ENCODE measurements at regions of chr2 and their contacts with region 1.

Region 1: DNA sequence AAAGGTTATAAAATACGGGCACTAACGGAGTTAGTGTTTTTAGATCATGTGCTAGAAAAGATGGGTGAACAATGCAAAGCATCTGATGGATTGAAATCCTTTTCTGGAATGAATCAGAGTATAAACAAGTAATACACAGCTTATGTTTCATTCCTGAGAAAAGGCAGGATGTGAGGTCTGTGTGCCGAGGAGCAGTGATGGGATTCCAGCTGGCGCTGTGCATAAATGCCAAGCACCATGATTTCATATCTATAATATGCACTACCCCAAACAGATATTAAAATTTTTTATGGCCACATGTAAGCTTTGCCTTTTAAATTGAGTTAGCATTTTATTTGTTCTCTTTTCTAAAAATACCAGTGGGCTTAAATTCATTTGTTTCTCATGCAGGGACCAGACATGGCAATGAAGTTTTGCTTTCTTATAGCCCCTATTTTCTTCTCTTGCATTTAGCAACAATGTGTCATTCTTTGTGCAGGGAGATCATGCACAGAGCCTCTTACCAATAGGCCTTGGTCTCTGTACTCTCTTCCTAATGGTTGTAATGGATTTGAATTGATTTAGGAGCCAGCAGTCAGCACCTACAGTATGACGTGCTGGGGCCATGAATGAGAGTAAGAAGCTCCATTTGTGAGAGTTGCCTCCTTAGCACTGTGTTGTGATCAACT is 323.9 kb downstream of the SLC8A1 start:
- DNase-seq: no peak
- ATAC-seq: no peak
- H3K4me3 ChIP-seq: no peak overlapping the region
- H3K27ac ChIP-seq: peak overlapping the region in 9 of 12 donors; percentile 4 to 91 (median 75)
- H3K4me1 ChIP-seq: peaks cover 0 to 78% (median 38%) of the 10 kb centered on the region in 12 donors
- H3K27me3 ChIP-seq: no peaks in the 10 kb centered on the region
- CTCF ChIP-seq: no peak
- POLR2A ChIP-seq: no peak

Region 2: DNA sequence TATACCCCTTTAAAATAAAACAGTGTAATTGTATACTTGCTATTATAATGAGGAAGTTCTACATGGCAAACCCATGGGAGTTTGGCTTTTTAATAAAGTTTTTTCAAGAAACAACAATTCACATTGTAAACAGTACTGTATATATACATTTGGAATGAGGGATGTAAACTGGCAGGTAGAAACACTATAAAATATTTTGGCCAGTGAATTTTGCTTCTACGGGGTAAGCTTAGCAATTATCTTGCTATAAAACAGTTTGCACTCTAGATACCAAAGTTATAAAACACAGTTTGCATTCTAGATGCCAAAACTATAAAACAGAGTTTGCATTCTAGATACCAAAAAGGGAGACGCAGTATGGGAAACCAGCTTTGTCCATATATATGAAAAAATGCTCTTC is 365.6 kb before region 1 on chr2:
- intact Hi-C with region 1: no loop called
- DNase-seq: no peak
- ATAC-seq: no peak
- H3K4me3 ChIP-seq: no peak overlapping the region
- H3K27ac ChIP-seq: no peak overlapping the region
- H3K4me1 ChIP-seq: no peaks in the 10 kb centered on the region
- H3K27me3 ChIP-seq: no peaks in the 10 kb centered on the region
- CTCF ChIP-seq: no peak
- POLR2A ChIP-seq: no peak

Region 3: GRCh38 chr2:39948016-39948719 is 179.9 kb before region 1 on chr2:
- intact Hi-C with region 1: no loop called
- DNase-seq: no peak
- ATAC-seq: no peak
- H3K4me3 ChIP-seq: no peak overlapping the region
- H3K27ac ChIP-seq: no peak overlapping the region
- H3K4me1 ChIP-seq: no peaks in the 10 kb centered on the region
- H3K27me3 ChIP-seq: no peaks in the 10 kb centered on the region
- CTCF ChIP-seq: no peak
- POLR2A ChIP-seq: no peak

Region 4: DNA sequence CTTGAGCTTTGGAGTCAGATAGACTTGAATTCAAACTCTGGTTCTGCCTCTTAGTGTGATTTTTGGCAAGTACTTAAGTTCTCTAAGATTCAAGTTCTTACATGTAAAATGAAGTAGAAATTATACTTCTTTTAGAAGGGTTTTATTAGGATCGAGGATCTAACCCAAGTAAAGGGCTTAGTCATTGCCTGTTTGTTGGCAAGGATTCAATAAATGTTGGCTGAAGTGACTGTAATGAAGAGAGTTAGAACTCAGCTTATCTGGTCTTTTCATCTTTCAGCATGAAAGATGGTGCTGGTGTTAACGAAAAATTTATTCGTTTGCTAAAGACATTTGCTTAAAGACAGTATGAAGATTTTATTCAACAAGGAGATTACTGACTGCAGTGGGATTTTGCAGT is 33.0 kb before region 1 on chr2:
- intact Hi-C with region 1: loop called in 2 of 10 experiments (anchors 5 kb)
- DNase-seq: no peak
- ATAC-seq: peak in 2 of 4 donors; percentile 15 to 22
- H3K4me3 ChIP-seq: no peak overlapping the region
- H3K27ac ChIP-seq: peak overlapping the region in 6 of 12 donors; percentile 24 to 50 (median 36)
- H3K4me1 ChIP-seq: peaks cover 0 to 33% (median 18%) of the 10 kb centered on the region in 12 donors
- H3K27me3 ChIP-seq: no peaks in the 10 kb centered on the region
- CTCF ChIP-seq: no peak
- POLR2A ChIP-seq: no peak

Region 5: GRCh38 chr2:40401896-40402295 is 273.9 kb after region 1 on chr2:
- intact Hi-C with region 1: no loop called
- DNase-seq: no peak
- ATAC-seq: no peak
- H3K4me3 ChIP-seq: no peak overlapping the region
- H3K27ac ChIP-seq: peak overlapping the region in 2 of 12 donors; percentile 27 to 68
- H3K4me1 ChIP-seq: peaks cover 0 to 89% (median 51%) of the 10 kb centered on the region in 12 donors
- H3K27me3 ChIP-seq: no peaks in the 10 kb centered on the region
- CTCF ChIP-seq: no peak
- POLR2A ChIP-seq: no peak

Region 6: GRCh38 chr2:41020358-41020757 is 892.3 kb after region 1 on chr2:
- intact Hi-C with region 1: no loop called
- DNase-seq: no peak
- ATAC-seq: no peak
- H3K4me3 ChIP-seq: no peak overlapping the region
- H3K27ac ChIP-seq: no peak overlapping the region
- H3K4me1 ChIP-seq: no peaks in the 10 kb centered on the region
- H3K27me3 ChIP-seq: no peaks in the 10 kb centered on the region
- CTCF ChIP-seq: no peak
- POLR2A ChIP-seq: no peak

Measured in heart left ventricle (tissue), 16 donors.